Mammary epithelial cell (primary cell): ENCODE measurements at regions of chrX and their contacts with region 1.

Region 1: GRCh38 chrX:134396174-134396573 is 63.8 kb upstream of the HPRT1 start:
- DNase-seq: peak; percentile 13
- H3K4me3 ChIP-seq: no peak overlapping the region
- H3K27ac ChIP-seq: no peak overlapping the region
- H3K4me1 ChIP-seq: no peaks in the 10 kb centered on the region
- H3K27me3 ChIP-seq: no peaks in the 10 kb centered on the region
- CTCF ChIP-seq: peak; percentile 72 to 80

Region 2: GRCh38 chrX:133921764-133922389 is 474.3 kb before region 1 on chrX:
- CTCF ChIA-PET with region 1: no interaction called
- dilution Hi-C with region 1: no loop called
- in situ Hi-C with region 1: no loop called
- intact Hi-C with region 1: loop called (anchors 10 kb)
- DNase-seq: peak; percentile 28
- H3K4me3 ChIP-seq: no peak overlapping the region
- H3K27ac ChIP-seq: no peak overlapping the region
- H3K4me1 ChIP-seq: no peaks in the 10 kb centered on the region
- H3K27me3 ChIP-seq: no peaks in the 10 kb centered on the region
- CTCF ChIP-seq: peak; percentile 66 to 85

Region 3: GRCh38 chrX:134026565-134027311 is 369.4 kb before region 1 on chrX:
- CTCF ChIA-PET with region 1: no interaction called
- dilution Hi-C with region 1: no loop called
- in situ Hi-C with region 1: no loop called
- intact Hi-C with region 1: loop called (anchors 1 kb)
- DNase-seq: peak; percentile 50
- H3K4me3 ChIP-seq: no peak overlapping the region
- H3K27ac ChIP-seq: no peak overlapping the region
- H3K4me1 ChIP-seq: no peaks in the 10 kb centered on the region
- H3K27me3 ChIP-seq: no peaks in the 10 kb centered on the region
- CTCF ChIP-seq: peak; percentile 49 to 65

Region 4: GRCh38 chrX:134144231-134144630 is 251.9 kb before region 1 on chrX:
- CTCF ChIA-PET with region 1: no interaction called
- dilution Hi-C with region 1: no loop called
- in situ Hi-C with region 1: no loop called
- intact Hi-C with region 1: loop called (anchors 10 kb)
- DNase-seq: peak; percentile 1
- H3K4me3 ChIP-seq: no peak overlapping the region
- H3K27ac ChIP-seq: no peak overlapping the region
- H3K4me1 ChIP-seq: no peaks in the 10 kb centered on the region
- H3K27me3 ChIP-seq: no peaks in the 10 kb centered on the region
- CTCF ChIP-seq: peak; percentile 7 to 46

Region 5: DNA sequence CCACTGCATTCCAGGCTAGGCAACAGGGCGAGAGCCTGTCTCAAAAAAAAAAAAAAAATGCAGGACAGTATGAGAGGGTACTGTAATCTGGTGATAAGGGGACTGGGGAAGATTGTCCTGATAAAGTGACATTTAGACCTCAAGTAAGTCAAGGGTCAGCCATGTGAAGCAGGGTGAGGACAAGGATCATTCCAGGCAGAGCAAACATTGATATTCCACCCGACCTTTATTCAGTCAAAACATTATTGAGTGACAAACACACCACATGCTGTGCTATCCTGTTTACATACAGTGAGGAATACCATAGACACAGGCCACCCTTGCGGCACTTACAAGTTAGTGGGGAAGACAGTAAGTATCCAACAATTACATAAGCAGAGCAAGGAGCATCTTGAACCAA is 1653.4 kb after region 1 on chrX:
- CTCF ChIA-PET with region 1: interaction called, 15 read pairs
- dilution Hi-C with region 1: no loop called
- in situ Hi-C with region 1: no loop called
- intact Hi-C with region 1: no loop called
- DNase-seq: no peak
- H3K4me3 ChIP-seq: no peak overlapping the region
- H3K27ac ChIP-seq: no peak overlapping the region
- H3K4me1 ChIP-seq: no peaks in the 10 kb centered on the region
- H3K27me3 ChIP-seq: no peaks in the 10 kb centered on the region
- CTCF ChIP-seq: no peak